Activated naive CD4-positive, alpha-beta T cell treated with anti-CD3 and anti-CD28 coated beads, Interleukin-2, amount 10 ng/mL, durations not matched to agents 7 days and 5 days (primary cell): ENCODE measurements at regions of chr20 and their contacts with region 1.

Region 1: DNA sequence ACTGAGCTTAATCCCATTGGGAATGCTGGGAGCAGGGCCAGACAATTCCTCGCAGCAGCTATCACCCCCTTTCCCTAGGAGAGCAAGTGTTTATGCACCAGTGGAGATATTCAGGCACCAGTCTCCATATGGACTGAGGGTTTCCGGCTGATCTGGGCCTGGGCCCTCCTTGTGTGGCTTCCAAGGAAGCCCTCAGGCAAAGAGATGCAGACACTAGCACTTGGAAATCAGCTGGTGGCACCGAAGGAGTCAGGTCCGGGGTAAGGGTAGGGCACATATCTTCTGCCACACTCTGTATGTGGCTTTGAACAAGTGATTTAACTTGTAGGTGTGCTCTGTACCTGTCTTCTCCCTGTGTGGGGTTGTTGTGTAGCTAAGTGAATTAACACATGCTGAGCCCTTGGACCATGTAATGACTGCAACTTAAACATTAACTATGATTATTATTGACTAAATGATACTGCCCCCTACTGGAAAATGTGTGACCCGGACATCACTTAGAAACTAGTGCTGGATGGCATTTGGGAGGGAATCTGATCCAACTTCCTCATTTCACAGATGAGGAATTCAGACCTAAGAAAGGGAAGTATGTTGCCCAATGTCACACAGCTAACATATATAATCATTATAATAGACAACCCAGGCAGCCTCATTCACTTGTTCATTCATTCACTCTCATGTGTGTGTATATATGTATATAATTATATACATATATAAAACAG is 19.3 kb upstream of the WFDC2 start:
- DNase-seq: peak; percentile 41
- H3K4me3 Mint-ChIP-seq: no peak overlapping the region
- H3K27ac Mint-ChIP-seq: no peak overlapping the region
- H3K4me1 Mint-ChIP-seq: peaks cover 11% of the 10 kb centered on the region
- H3K27me3 Mint-ChIP-seq: peaks cover 24% of the 10 kb centered on the region

Region 2: GRCh38 chr20:45337367-45338120 is 112.7 kb before region 1 on chr20:
- CTCF ChIA-PET with region 1: no interaction called
- DNase-seq: no peak
- H3K4me3 Mint-ChIP-seq: no peak overlapping the region
- H3K27ac Mint-ChIP-seq: no peak overlapping the region
- H3K4me1 Mint-ChIP-seq: no peaks in the 10 kb centered on the region
- H3K27me3 Mint-ChIP-seq: peaks cover 5% of the 10 kb centered on the region

Region 3: GRCh38 chr20:45362804-45363610 is 87.3 kb before region 1 on chr20 and contains the start of gene SYS1:
- CTCF ChIA-PET with region 1: interaction called, 48 read pairs
- DNase-seq: peak; percentile 99
- H3K4me3 Mint-ChIP-seq: peak within 1 kb of the TSS; percentile 91
- H3K27ac Mint-ChIP-seq: peak within 1 kb of the TSS; percentile 91
- H3K4me1 Mint-ChIP-seq: peaks cover 54% of the 10 kb centered on the region
- H3K27me3 Mint-ChIP-seq: no peaks in the 10 kb centered on the region

Region 4: DNA sequence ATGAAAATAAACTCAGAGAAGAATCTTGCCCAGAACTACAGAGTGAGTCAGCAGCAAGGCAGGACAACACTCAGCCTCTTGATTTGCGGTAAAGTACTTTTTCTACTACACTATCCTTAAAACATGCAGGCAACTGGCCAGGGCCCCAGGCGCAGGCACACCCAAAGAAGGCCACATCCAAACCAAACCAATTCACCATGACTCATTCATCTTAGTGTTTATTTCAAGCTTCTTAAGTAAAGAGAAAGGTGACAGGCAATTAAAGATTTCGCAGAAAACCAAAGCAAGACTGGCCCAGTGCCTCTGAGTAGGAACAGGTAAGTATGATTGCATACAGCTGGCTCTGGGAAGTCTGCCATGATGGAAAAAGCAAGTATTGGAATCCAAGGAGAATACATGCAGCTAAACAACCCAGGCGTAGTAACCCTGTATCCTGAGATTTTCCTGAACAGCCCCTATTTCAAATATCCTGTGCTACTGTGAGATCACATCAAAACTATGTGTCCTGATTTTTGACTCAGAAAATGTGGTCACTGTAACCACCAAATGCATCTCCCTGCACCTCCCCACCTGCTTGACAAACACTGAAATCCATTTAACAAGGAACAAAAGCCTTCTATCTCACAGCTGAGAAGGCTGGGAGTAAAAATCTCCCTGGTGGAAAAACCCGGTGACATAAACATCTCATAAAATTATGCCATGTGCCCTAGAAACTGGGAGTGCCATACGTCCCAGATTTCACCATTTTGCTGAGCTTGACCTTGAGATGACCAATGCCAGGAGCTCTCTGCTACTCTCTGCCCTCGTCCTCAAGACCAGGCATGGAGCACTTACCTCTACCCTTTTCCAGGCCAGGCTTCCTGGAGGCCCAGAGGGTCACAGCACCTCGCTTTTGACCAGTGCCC is 329.0 kb after region 1 on chr20:
- CTCF ChIA-PET with region 1: no interaction called
- DNase-seq: no peak
- H3K4me3 Mint-ChIP-seq: no peak overlapping the region
- H3K27ac Mint-ChIP-seq: no peak overlapping the region
- H3K4me1 Mint-ChIP-seq: peaks cover 27% of the 10 kb centered on the region
- H3K27me3 Mint-ChIP-seq: peaks cover 18% of the 10 kb centered on the region